ENCODE measurements at regions of chr1 and their contacts with region 1.

Region 1: DNA sequence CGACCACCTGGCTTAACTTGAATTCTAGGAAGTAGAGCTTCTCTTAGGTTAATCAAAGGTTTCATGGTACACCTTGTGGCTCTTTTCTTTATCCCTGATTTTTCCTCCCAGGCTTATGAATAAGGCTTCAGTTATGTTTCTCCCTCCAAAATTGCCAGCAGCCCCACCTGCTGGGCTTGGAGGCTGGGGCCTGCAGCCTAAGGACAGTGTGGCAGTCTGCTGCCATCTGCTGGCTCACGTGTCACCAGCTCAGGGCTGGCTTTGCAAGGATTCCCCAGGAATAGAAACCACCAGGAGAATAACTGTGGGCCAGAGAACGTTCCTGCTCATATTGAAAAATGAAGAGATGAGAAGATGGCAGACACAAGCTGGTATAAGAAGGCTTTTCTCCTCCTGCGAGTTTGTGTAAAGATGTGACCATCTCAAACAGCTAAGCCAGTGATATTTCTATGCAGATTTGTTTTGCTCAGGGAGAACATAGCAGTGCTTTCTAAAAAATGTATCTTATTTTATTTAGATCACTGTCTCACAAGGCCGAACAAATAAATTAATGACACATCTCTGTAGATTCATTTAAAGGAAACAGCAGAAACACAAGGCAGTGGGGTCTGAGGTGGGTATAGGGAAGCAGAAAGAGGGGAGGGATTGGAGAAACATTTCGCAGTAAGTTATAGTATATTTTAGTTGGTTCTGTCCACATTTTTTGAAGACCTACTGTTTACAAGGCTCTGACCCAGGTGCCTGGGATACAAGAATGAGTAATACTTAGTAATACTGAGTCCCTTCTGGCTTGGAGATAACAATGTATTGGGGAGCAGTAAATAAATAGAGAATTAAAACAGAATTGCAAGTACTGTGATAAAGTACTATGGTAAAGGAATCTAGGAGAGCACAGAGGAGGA is 291.1 kb upstream of the SGIP1 start:
- DNase-seq: peak; percentile 89
- ATAC-seq: peak; percentile 41
- H3K4me3 Mint-ChIP-seq: no peak overlapping the region
- H3K27ac Mint-ChIP-seq: no peak overlapping the region
- H3K4me1 Mint-ChIP-seq: no peaks in the 10 kb centered on the region
- H3K27me3 Mint-ChIP-seq: peaks cover 5% of the 10 kb centered on the region

Region 2: DNA sequence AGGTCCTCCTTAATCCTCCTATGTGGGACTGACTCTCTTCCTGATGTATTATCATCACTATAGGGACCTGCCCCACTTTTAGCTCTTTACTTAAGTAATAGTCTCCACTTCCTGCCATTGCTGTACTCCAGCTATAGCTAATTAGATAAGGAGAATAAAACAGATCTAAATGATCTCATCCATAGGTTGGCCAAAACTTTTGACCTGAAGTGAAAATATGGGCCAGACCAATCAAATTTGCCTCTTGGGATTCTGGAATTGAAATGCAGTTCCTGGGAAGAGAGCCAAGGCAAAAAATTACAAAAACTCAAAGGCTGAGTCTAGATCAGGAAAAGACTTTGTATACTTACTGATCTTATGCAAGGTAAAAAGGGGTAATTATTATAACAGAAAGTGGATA is 486.3 kb before region 1 on chr1:
- CTCF ChIA-PET with region 1: no interaction called
- POLR2A ChIA-PET with region 1: no interaction called
- intact Hi-C with region 1: no loop called
- DNase-seq: no peak
- ATAC-seq: no peak
- H3K4me3 Mint-ChIP-seq: no peak overlapping the region
- H3K27ac Mint-ChIP-seq: no peak overlapping the region
- H3K4me1 Mint-ChIP-seq: no peaks in the 10 kb centered on the region
- H3K27me3 Mint-ChIP-seq: peaks cover 7% of the 10 kb centered on the region

Region 3: DNA sequence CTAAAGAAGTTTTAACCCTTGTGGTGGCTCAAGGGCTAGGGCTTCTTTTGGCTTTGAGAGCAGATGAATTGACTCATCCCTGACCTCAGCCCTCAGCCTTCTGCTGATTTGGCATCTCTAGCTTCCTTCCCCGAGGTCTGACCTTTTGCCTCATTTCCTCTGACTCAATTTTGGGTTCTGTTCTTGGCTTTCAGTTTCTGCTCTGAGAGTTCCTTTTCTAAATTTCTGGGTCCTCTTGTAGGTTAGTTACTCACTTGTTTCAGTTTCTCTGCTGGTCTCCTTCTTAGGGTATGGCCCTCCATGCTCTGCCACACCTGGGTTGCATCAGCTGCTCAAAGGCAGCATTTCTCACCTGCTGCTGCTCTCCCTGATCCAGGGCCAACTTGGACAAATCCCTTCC is 430.8 kb before region 1 on chr1:
- CTCF ChIA-PET with region 1: interaction called, 3 read pairs
- POLR2A ChIA-PET with region 1: interaction called, 3 read pairs
- intact Hi-C with region 1: loop called (anchors 1 to 2 kb)
- DNase-seq: peak; percentile 81
- ATAC-seq: peak; percentile 98
- H3K4me3 Mint-ChIP-seq: peak overlapping the region; percentile 11
- H3K27ac Mint-ChIP-seq: peak overlapping the region; percentile 74
- H3K4me1 Mint-ChIP-seq: peaks cover 24% of the 10 kb centered on the region
- H3K27me3 Mint-ChIP-seq: peaks cover 36% of the 10 kb centered on the region

Region 4: GRCh38 chr1:66137235-66137634 is 105.7 kb before region 1 on chr1:
- CTCF ChIA-PET with region 1: interaction called, 5 read pairs
- POLR2A ChIA-PET with region 1: no interaction called
- intact Hi-C with region 1: loop called (anchors 5 kb)
- DNase-seq: peak; percentile 5
- ATAC-seq: peak; percentile 96
- H3K4me3 Mint-ChIP-seq: no peak overlapping the region
- H3K27ac Mint-ChIP-seq: no peak overlapping the region
- H3K4me1 Mint-ChIP-seq: peaks cover 6% of the 10 kb centered on the region
- H3K27me3 Mint-ChIP-seq: peaks cover 5% of the 10 kb centered on the region

Region 5: GRCh38 chr1:66258404-66259105 is 15.7 kb after region 1 on chr1:
- CTCF ChIA-PET with region 1: interaction called, 57 read pairs
- POLR2A ChIA-PET with region 1: interaction called, 6 read pairs
- intact Hi-C with region 1: loop called (anchors 1 kb)
- DNase-seq: no peak
- ATAC-seq: peak; percentile 91
- H3K4me3 Mint-ChIP-seq: no peak overlapping the region
- H3K27ac Mint-ChIP-seq: peak overlapping the region; percentile 68
- H3K4me1 Mint-ChIP-seq: peaks cover 90% of the 10 kb centered on the region
- H3K27me3 Mint-ChIP-seq: no peaks in the 10 kb centered on the region

Region 6: DNA sequence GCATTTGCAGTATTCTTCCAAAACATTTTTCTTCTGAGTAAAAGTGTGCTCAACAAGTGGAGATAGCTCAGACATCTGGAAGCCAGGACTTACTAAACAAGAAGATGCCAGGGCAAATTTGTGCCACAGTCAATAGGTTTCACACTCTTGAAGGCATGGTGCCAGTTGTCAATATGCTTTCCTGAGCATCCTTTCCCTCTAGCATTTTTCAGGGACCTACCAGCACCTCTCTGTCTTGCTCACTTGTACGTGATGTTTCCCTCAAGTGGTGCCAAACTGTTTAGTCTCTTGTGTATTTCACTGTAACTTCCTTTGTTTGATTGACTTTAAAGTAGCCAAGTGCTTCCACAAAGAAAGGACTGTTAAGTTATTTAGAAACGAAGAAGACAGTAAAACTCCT is 97.0 kb after region 1 on chr1:
- CTCF ChIA-PET with region 1: interaction called, 11 read pairs
- POLR2A ChIA-PET with region 1: interaction called, 7 read pairs
- intact Hi-C with region 1: no loop called
- DNase-seq: no peak
- ATAC-seq: no peak
- H3K4me3 Mint-ChIP-seq: peak overlapping the region; percentile 69
- H3K27ac Mint-ChIP-seq: peak overlapping the region; percentile 85
- H3K4me1 Mint-ChIP-seq: peaks cover 68% of the 10 kb centered on the region
- H3K27me3 Mint-ChIP-seq: no peaks in the 10 kb centered on the region

Region 7: DNA sequence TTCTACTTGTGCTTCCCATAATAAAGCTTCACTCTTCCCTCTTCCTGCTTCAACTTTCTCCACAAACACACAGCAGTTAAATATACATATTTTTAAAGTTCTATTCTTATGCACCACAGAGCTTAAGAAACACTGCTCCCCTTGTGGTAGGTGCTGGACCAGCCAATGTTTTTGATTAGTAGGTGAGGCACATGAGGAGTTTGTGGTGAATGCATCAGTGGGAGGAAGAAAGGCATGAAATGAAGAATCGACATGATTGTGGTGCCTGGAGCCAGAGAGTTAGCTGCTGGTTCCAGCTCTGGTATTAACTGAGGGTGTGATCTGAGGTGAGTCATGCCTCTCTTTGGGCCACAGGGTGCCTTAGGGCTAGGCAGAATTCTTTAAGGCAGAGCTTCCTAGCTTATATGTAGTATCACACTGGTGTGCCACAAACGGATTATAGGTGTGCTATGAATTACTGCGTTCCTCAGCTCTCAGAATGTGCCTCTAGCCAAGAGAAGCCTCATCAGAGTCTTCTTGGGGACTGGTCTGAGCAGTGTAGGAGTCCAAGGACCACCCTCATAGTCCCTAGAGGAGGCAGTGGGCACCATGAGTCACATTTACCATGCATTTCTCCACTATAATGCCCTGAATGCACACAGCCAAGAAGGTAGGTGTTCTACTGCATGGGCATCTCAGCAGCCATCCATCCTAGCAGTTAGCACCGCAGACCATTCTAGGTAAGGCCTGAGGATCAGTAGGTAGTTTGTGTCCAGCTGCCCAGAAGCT is 193.7 kb after region 1 on chr1:
- CTCF ChIA-PET with region 1: interaction called, 359 read pairs
- POLR2A ChIA-PET with region 1: interaction called, 6 read pairs
- intact Hi-C with region 1: loop called in 1 of 2 experiments (anchors 1 kb)
- DNase-seq: peak; percentile 77
- ATAC-seq: peak; percentile 97
- H3K4me3 Mint-ChIP-seq: no peak overlapping the region
- H3K27ac Mint-ChIP-seq: peak overlapping the region; percentile 58
- H3K4me1 Mint-ChIP-seq: peaks cover 39% of the 10 kb centered on the region
- H3K27me3 Mint-ChIP-seq: no peaks in the 10 kb centered on the region

Region 8: GRCh38 chr1:66725885-66726665 is 483.2 kb after region 1 on chr1:
- CTCF ChIA-PET with region 1: no interaction called
- POLR2A ChIA-PET with region 1: no interaction called
- intact Hi-C with region 1: loop called in 1 of 2 experiments (anchors 2 kb)
- DNase-seq: peak; percentile 71
- ATAC-seq: peak; percentile 80
- H3K4me3 Mint-ChIP-seq: no peak overlapping the region
- H3K27ac Mint-ChIP-seq: no peak overlapping the region
- H3K4me1 Mint-ChIP-seq: peaks cover 20% of the 10 kb centered on the region
- H3K27me3 Mint-ChIP-seq: peaks cover 14% of the 10 kb centered on the region